ENCODE measurements at regions of chr4 and their contacts with region 1.

Region 1: DNA sequence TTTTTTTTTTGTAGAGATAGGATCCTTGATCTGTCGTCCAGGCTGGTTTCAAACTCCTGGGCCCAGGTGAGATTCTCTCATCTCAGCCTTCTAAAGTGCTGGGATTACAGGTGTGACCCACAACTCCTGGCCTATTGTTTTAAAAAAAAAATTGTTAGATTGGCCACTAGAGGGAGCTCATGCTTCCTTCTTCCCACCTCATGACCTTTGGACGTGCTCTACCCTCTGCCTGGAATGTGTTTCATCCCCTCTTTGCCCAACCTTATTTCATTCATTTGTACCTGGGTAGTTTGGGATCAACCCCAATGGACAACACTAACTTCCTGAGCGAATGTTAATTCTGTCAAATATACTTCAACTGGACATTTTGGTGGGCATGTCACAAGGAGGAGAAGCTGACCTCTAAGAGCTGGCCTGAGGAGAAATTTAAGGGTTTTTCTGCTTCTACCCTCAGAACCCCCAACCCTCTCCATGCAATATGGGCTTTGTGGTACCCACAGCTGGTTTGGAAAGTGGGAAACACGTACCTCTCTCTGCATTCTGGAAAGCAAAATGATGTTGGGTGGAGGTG is 6.4 kb downstream of the PPEF2 start:
- DNase-seq: peak; percentile 38 to 59 (median 52)
- H3K4me3 ChIP-seq: no peak overlapping the region
- H3K4me3 Mint-ChIP-seq: no peak overlapping the region
- H3K27ac ChIP-seq: no peak overlapping the region
- H3K27ac Mint-ChIP-seq: no peak overlapping the region
- H3K4me1 ChIP-seq: peaks cover 3 to 7% of the 10 kb centered on the region in 2 donors
- H3K4me1 Mint-ChIP-seq: peaks cover 9% of the 10 kb centered on the region
- H3K27me3 ChIP-seq: no peaks in the 10 kb centered on the region
- H3K27me3 Mint-ChIP-seq: peaks cover 1 to 3% (median 2%) of the 10 kb centered on the region in 3 donors
- CTCF ChIP-seq: peak; percentile 92

Region 2: GRCh38 chr4:75844151-75844662 is 51.6 kb before region 1 on chr4:
- intact Hi-C with region 1: no loop called
- DNase-seq: no peak
- H3K4me3 ChIP-seq: no peak overlapping the region
- H3K4me3 Mint-ChIP-seq: no peak overlapping the region
- H3K27ac ChIP-seq: no peak overlapping the region
- H3K27ac Mint-ChIP-seq: no peak overlapping the region
- H3K4me1 ChIP-seq: peaks cover 1 to 3% of the 10 kb centered on the region in 2 donors
- H3K4me1 Mint-ChIP-seq: peaks cover 15% of the 10 kb centered on the region
- H3K27me3 ChIP-seq: no peaks in the 10 kb centered on the region
- H3K27me3 Mint-ChIP-seq: peaks cover 2 to 3% (median 3%) of the 10 kb centered on the region in 3 donors
- CTCF ChIP-seq: no peak

Region 3: GRCh38 chr4:75940692-75941253 is 44.9 kb after region 1 on chr4 and contains the start of gene NAAA:
- intact Hi-C with region 1: loop called in 1 of 2 experiments (anchors 5 kb)
- DNase-seq: peak; percentile 27 to 76 (median 65)
- H3K4me3 ChIP-seq: peak within 1 kb of the TSS; percentile 87 to 100 (median 99)
- H3K4me3 Mint-ChIP-seq: peak within 1 kb of the TSS; percentile 98 to 99
- H3K27ac ChIP-seq: peak within 1 kb of the TSS; percentile 94 to 98
- H3K27ac Mint-ChIP-seq: peak within 1 kb of the TSS; percentile 93 to 99 (median 96)
- H3K4me1 ChIP-seq: peaks cover 35 to 46% of the 10 kb centered on the region in 2 donors
- H3K4me1 Mint-ChIP-seq: peaks cover 44% of the 10 kb centered on the region
- H3K27me3 ChIP-seq: no peaks in the 10 kb centered on the region
- H3K27me3 Mint-ChIP-seq: no peaks in the 10 kb centered on the region
- CTCF ChIP-seq: no peak
- polyA plus RNA-seq, gene NAAA: 170 to 308 (median 231) TPM